ENCODE measurements at regions of chr9 and their contacts with region 1.

Region 1: GRCh38 chr9:122099271-122099869 is 6.3 kb upstream of the TTLL11 start:
- DNase-seq: peak; percentile 81

Region 2: GRCh38 chr9:121921444-121921843 is 177.9 kb before region 1 on chr9:
- CTCF ChIA-PET with region 1: no interaction called
- POLR2A ChIA-PET with region 1: no interaction called
- DNase-seq: no peak

Region 3: DNA sequence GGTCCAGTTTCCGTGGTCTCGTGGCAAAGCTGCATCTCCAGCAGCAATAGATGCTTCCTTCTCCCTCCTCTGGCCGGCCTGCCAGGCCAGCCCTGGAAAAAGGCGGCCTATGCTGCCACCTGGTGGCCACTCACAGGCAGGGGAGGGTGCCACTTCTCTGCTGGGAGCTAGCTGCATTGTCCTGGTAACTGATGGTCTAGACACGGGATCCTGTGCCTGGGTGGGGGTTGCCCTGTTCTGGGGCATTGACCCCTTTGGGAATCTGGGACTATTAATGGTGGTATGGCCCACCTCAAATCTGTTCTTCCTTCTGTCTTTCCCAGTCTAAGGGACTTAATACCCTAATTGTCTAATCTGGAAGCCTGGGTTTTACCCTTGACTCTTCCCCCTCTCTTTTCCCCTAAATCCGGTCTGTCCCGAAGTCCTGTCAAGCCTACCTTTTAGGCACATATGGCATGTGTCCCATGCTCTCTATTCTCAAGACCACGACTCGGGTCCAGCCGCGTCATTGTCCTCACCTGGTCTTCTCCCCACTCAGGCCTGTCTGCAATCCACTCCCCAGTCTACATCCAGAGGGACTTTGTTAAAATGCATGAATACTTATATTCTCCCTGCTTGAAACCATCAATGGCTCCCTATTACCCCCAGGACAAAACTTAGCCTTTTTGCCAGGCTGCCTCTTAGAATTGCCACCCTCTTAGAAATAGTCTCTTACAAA is 251.4 kb after region 1 on chr9:
- CTCF ChIA-PET with region 1: interaction called, 27 read pairs
- POLR2A ChIA-PET with region 1: no interaction called
- DNase-seq: peak; percentile 86

Measured in HEK293T (cell line).